GM18951 (cell line): ENCODE measurements at regions of chr17 and their contacts with region 1.

Region 1: DNA sequence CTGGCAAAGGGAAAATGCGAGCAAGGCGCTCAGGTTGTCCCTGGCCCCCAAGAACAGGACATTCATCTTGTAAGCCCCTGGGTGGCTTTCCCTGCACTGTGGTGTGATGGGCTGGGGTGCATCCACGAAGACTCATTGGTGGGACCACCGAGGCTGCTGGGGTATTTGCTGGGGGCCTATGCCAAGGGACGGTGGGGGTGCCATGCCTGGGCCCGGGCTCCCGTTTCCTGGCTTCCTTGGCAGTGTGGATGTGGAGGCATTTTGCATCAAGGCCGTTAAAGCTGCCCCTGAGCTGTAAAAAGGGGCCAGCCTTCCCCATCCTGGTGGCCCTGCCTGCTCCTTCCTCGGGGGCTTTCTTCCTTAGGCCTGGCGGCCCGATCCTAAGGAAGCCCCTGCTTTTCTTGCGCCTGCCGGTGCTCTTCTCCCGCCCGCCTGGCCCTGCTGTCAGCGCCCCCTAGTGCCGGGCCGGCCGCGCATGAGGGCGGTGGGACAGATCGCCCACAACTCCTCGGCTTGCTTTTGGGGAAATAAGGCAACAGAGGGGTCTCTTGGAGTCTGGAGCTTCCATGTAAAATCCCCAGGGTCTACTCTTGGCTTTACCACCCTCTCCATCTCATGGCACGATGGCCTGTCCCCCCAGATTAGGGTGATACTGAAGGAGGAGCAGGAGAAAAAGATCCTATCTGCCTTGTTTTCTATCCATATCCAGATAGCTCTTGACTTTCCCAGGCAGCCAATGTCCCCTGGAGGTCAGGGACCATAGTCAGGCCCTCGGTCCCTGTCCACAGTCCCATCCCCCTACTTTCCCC is 9.8 kb upstream of the TBX2 start:
- POLR2A ChIP-seq: no peak

Region 2: DNA sequence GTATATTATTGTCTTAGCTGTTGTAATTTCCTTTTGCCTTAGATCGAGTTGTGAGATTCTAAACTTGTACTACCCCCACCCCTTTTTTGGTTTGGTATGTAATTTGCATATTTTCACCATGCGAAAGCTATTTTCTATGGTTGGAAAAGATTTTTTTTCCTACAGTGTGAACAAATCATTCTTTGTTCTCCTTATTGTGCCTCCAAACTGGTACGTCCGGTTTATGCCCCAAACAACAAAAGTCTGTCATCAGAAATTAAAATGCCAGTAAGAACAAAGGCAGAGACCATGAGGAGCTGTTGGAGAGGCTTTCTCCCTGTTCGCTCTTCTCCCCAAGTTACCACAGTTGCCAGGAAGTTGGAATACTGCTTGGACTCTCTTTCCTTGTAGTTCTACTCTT is 646.1 kb before region 1 on chr17:
- in situ Hi-C with region 1: loop called (anchors 25 kb)
- POLR2A ChIP-seq: no peak

Region 3: DNA sequence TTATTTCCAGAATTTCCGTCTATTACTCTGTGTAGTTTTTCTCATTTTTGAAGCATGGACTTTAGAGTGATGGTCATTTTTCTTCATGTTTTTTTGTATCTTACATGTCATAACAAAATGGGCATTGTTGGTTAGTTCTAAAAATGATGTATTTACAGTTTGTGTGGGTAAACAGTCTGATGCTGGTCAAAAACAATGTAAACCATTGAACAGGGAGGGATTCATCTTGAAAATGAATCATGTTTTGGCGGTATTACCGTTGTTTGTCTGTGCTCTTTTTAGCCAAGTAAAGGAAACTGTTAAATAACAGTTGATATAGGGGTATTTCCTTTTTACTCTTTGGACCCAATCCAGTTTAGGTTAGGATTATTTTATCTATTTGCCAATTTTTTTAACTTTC is 396.4 kb before region 1 on chr17:
- in situ Hi-C with region 1: loop called (anchors 10 kb)
- POLR2A ChIP-seq: no peak

Region 4: DNA sequence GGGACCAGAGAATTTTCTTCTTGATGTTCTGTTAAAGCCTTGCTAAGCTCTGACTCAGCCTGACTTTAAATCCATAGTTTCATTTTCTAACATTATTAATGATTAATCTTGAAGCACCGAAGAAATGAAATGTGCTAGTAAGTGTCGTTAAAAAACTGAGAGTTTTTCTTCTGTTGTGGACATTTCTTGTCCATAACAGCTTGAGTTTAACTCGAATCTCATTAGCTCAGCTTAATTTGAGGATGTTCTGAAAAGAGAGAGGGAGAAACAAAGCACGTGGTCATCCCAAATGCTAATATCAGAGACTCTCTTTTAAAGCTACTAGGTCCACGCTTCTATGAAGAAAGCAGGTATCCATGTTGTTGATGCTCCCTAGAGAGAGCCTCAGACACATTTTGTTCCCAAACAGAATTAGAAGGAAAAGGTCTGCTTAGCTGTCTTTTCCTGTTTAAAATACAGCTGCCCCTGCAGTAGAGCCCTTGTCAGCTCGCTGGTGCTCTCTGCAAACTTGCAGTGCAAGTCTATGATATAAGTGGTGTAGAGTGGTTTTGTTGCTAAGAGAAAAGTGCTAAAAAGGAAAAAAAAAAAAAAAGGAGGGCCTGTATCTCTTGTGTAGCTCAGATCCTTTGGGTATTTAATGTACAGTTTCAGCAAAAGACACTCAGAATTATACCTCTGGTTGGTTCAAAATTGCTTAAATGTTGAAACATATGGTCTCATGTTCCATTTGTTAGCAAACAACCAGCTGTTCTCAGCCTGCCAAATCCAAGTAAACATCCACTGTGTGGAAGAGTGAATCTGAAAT is 181.4 kb before region 1 on chr17:
- in situ Hi-C with region 1: no loop called
- POLR2A ChIP-seq: no peak